Calu3 (cell line): ENCODE measurements at regions of chr20 and their contacts with region 1.

Region 1: DNA sequence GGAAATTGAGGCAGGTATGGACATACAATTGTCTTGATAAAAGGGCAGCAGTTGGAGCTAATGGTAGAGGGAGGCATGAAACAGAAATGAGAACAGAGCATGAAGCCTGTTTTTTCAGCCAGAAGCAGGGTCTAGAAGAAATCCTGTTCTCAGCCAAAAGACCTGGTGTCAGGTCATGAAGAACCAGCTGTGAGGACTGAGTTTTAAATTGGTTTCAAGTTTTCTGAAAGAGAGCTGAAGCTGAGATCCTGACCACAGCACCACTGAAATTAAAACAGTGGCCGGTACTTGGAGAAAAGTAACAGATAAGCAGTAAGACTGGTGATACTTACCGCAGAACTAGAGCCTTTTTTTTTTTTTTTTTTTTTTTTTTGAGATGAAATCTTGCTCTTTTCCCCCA is 283.8 kb upstream of the BMP2 start:
- DNase-seq: no peak
- H3K4me3 Mint-ChIP-seq: no peak overlapping the region
- H3K27ac Mint-ChIP-seq: no peak overlapping the region
- H3K4me1 Mint-ChIP-seq: no peaks in the 10 kb centered on the region
- H3K27me3 Mint-ChIP-seq: no peaks in the 10 kb centered on the region
- CTCF ChIP-seq: no peak

Region 2: DNA sequence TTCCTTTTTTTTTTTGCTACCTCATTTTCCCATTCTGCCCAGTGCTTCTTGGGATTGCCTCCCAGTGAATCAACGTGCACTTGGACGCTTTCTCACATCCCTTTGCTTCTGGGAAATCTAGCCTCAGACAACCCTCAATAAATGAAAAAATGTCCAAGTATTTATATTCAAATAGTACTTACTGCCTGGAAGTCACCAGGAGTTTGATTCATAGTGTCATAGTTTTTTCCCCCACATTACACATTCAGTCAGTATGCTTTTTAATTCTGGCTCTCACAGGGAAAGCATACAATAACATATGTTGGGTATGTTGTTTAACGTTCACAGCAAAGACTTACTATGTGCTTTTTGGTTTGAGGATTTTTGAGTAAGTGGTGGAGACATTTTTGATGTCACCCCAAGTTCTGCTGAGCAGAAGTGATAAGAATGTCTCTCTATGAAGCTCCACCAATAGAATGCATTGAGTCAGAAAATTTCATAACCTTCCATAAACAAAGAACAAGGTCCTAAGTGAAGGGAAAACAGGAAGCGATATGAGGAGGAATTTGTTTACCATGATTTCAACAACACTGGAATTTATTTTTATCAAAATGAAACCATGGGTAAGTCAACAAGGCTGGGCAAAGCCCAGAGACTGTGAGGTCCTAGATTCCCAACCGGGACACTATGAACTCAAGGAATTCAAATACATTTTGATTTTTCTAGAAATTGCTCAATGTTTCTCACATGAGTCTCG is 17.5 kb before region 1 on chr20:
- CTCF ChIA-PET with region 1: no interaction called
- intact Hi-C with region 1: loop called (anchors 1 kb)
- DNase-seq: no peak
- H3K4me3 Mint-ChIP-seq: no peak overlapping the region
- H3K27ac Mint-ChIP-seq: no peak overlapping the region
- H3K4me1 Mint-ChIP-seq: no peaks in the 10 kb centered on the region
- H3K27me3 Mint-ChIP-seq: no peaks in the 10 kb centered on the region
- CTCF ChIP-seq: no peak

Region 3: DNA sequence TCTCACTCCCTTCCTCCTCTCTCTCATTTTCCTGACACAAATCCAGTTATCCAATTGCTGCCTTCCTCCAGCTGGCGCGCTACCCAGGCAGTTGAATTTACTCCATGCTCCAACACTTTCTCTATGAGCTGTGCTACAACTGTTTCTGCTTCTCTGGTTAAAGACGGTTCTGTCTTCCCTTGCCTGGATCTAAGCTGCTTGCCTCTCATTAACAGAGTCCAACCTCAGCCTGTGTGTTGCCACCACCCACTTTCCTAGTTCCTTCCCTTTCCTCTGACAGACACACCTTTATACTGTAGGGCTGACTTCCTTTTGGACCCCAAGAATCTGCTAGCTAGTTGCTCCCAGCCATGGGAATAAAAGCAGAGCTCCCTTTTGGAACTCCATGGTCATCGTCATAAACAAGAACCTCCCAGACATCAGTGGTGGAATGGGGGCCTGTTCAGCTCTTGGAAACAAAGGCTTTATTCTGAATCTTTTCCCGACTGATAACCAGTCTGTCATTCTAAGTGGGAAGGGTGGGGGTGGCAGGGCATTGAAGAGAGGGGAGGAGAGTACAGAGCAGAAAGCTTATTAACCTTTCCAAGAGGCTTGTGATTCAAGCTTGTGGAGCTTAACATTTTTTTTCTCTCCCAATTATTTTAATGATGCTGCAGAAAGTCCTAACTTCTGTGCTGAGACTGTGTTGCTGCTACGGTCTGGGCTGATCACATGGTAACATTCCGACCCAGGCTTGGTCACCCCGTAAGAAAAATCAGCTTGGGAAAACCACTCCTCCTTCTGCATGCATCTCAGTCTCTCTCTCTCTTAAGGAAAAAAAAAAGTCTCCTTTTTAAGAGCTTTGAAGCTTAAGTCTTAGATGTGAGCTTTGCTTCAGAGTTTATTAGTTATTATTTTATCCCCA is 252.5 kb after region 1 on chr20:
- CTCF ChIA-PET with region 1: no interaction called
- intact Hi-C with region 1: no loop called
- DNase-seq: no peak
- H3K4me3 Mint-ChIP-seq: peak overlapping the region; percentile 0
- H3K27ac Mint-ChIP-seq: no peak overlapping the region
- H3K4me1 Mint-ChIP-seq: peaks cover 32% of the 10 kb centered on the region
- H3K27me3 Mint-ChIP-seq: no peaks in the 10 kb centered on the region
- CTCF ChIP-seq: no peak